AG04449 (cell line): ENCODE measurements at regions of chr7 and their contacts with region 1.

Region 1: DNA sequence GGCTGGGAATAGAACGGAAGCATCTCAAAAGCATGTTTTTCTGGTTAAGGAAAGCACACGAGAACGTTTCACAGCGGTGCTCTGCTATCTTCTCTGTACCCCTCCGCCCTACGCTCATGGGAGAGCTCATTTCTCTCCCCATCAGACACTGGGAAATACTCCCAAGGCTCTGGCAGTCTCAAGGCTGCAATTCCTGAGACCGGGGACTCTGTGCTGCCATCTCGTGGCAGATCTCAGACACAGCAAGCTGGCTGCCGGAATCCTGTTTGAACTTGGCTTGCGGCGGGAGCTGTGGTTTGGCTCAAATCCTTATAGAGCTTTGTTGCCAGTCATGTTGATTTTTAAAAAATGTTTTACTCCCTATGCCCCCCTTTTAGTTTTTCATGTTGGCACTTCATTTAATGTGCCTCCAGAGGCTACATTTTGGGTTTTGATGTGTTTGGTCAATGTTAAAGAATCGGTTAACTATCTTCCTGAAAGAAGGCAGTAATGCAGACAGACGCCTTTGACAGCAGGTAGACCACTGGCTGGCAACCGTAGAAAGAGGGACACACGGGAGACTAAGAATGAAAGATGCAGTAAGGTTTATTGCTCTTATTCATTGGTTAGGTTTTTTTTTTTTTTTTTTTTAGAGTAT is 27.6 kb downstream of the BMPER start:
- DNase-seq: peak; percentile 52
- H3K4me3 ChIP-seq: peak overlapping the region; percentile 10; the same call in 1 of the 2 replicates
- CTCF ChIP-seq: peak; percentile 93

Region 2: DNA sequence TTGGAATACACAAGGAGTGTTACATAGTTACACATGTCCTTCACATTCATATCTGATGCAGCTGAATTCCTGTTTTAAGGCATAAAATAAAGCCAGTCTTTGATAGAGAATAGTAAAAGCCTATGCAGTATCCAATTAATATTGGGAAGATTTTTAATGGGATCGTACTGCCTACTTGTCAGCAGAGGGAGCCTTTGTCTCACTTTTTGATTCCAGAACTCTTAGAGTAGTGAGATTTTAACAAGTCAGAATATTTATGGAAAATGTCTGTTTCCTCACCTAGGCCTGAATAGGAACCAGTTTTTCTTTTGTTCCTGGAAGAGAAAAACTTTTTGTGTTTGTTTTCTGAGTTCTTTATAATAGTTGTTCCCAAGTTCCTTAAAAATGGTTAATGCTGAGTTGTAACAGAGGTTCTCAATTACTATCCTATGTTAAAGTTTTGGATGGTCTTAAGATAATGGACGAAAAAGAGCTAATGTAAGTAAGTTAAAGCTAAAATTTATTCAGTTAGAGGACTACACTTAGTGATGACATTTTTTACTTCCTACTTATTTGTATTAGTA is 689.5 kb before region 1 on chr7:
- CTCF ChIA-PET with region 1: interaction called, 53 read pairs
- POLR2A ChIA-PET with region 1: no interaction called
- DNase-seq: no peak
- H3K4me3 ChIP-seq: no peak overlapping the region
- CTCF ChIP-seq: peak; percentile 46

Region 3: DNA sequence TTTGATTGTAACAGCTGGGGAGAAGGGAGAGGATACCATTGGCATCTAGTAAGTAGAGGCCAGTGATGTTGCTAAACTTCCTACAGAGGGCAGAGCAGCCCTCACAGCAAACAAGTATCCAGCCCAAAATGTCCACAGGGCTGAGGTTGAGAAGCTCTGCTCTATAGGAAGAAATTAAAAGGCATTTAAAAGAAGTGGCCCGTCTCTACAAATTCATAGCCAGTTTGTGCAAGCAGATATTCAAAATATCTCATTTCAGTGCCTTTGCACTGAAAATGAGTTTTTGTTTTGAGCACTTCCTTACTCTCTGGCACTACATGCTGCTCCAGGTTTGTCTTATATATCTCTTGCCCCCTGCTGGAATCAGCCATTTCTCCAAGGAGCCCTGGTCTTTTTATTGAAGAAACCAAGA is 473.6 kb before region 1 on chr7:
- CTCF ChIA-PET with region 1: interaction called, 20 read pairs
- POLR2A ChIA-PET with region 1: no interaction called
- DNase-seq: peak; percentile 23
- H3K4me3 ChIP-seq: no peak overlapping the region
- CTCF ChIP-seq: peak; percentile 61

Region 4: DNA sequence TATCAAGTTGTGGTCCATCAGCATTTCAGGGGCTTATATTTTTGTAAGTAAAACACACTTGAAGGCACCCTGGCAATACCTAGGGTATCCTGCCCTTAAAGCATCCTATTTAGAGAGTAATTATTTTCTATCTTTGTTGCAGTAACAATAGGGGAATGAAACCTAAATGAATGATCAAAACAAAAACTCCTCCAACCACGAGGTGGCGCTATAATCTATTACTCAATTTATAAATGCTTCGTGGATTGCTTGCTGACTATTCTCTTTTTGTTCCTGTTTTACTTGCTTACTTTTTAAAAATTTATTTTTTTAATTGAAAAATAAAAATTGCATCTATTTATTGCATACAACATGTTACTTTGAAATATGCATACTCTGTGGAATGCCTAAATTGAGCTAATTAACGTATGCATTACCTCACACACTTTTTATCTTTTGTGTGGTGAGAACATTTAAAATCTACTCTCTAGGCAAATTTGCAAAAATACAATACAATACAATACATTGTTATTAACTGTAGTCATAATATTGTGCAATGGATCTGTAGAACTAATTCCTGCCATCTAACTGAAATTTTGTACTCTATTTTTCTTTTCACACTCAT is 175.3 kb before region 1 on chr7:
- CTCF ChIA-PET with region 1: interaction called, 126 read pairs
- POLR2A ChIA-PET with region 1: no interaction called
- DNase-seq: no peak
- H3K4me3 ChIP-seq: no peak overlapping the region
- CTCF ChIP-seq: peak; percentile 26

Region 5: DNA sequence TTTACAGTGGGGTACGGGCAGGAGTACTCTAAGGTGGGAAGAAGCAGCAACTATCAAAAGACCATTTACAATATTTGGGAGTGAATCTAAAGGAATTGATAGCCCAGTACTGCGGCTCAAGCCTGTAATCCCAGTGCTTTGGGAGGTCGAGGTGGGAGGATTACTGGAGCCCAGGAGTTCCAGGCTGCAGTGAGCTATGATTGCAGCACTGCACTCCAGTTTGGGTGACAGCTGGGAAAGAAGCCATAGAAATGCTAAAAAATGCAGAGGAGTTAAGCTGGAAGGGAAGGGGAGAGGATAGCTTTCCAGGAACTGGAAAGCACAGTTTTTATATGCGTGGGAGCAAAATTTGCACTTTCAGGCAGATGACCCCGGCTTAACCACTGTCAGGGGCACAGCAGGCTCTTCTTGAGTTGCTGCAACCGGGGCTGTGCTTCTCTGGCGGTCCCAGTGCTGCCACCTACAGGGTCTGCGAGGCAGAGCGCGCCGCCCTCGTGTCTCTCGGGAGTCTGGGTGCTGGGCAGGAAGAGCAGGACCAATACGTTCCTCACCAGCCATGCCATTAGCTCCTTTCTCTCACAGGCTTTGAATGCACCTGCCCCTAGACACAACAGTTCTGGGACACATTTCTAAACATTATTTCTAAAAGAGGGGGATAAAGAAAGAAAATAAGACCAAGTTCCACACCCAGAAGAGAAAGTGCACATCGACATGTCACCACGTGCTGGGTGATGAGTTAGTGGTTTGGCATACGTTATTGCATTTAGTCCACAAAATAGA is 37.7 kb before region 1 on chr7:
- CTCF ChIA-PET with region 1: interaction called, 32 read pairs
- POLR2A ChIA-PET with region 1: no interaction called
- DNase-seq: no peak
- H3K4me3 ChIP-seq: no peak overlapping the region; the same call in 1 of the 2 replicates
- CTCF ChIP-seq: peak; percentile 99

Region 6: GRCh38 chr7:33946094-33946700 is 13.2 kb after region 1 on chr7:
- CTCF ChIA-PET with region 1: interaction called, 61 read pairs
- POLR2A ChIA-PET with region 1: interaction called, 5 read pairs
- DNase-seq: no peak
- H3K4me3 ChIP-seq: no peak overlapping the region
- CTCF ChIP-seq: no peak

Region 7: GRCh38 chr7:34091323-34091917 is 158.5 kb after region 1 on chr7:
- CTCF ChIA-PET with region 1: interaction called, 14 read pairs
- POLR2A ChIA-PET with region 1: no interaction called
- DNase-seq: no peak
- H3K4me3 ChIP-seq: no peak overlapping the region
- CTCF ChIP-seq: peak; percentile 50